SK-N-SH (cell line): ENCODE measurements at regions of chr3 and their contacts with region 1.

Region 1: GRCh38 chr3:52436500-52437149 is 8.3 kb downstream of the SEMA3G start:
- DNase-seq: peak; percentile 27
- H3K4me3 ChIP-seq: no peak overlapping the region
- H3K27ac ChIP-seq: no peak overlapping the region
- H3K4me1 ChIP-seq: peaks cover 0 to 5% of the 10 kb centered on the region in 2 experiments; a peak in 1 of 4 replicates
- H3K27me3 ChIP-seq: no peaks in the 10 kb centered on the region
- CTCF ChIP-seq: no peak
- EP300 ChIP-seq: no peak
- RAD21 ChIP-seq: no peak

Region 2: GRCh38 chr3:52407779-52408178 is 28.8 kb before region 1 on chr3:
- CTCF ChIA-PET with region 1: interaction called, 578 read pairs
- POLR2A ChIA-PET with region 1: no interaction called
- DNase-seq: peak; percentile 11
- H3K4me3 ChIP-seq: no peak overlapping the region
- H3K27ac ChIP-seq: no peak overlapping the region
- H3K4me1 ChIP-seq: peaks cover 3 to 32% of the 10 kb centered on the region in 2 experiments; a peak in 3 of 4 replicates
- H3K27me3 ChIP-seq: no peaks in the 10 kb centered on the region
- CTCF ChIP-seq: no peak
- EP300 ChIP-seq: no peak
- RAD21 ChIP-seq: no peak

Region 3: GRCh38 chr3:53269888-53270880 is 833.6 kb after region 1 on chr3:
- CTCF ChIA-PET with region 1: no interaction called
- POLR2A ChIA-PET with region 1: no interaction called
- DNase-seq: peak; percentile 58
- H3K4me3 ChIP-seq: 0 out of 4 replicates have a peak overlapping the region, but pooled peaks of 1 of the 2 experiments have one; percentile 20
- H3K27ac ChIP-seq: peak overlapping the region; percentile 80 to 90
- H3K4me1 ChIP-seq: peaks cover 9 to 18% of the 10 kb centered on the region in 2 experiments; a peak in 3 of 4 replicates
- H3K27me3 ChIP-seq: no peaks in the 10 kb centered on the region
- CTCF ChIP-seq: no peak
- EP300 ChIP-seq: peak in 1 of 2 experiments; percentile 72; a peak in 1 of 4 replicates
- RAD21 ChIP-seq: no peak